Left colon (tissue), 2 donors: ENCODE measurements at regions of chr10 and their contacts with region 1.

Region 1: GRCh38 chr10:16612115-16612980 is 90.7 kb upstream of the C1QL3 start:
- DNase-seq: peak in 1 of 2 donors; percentile 14
- ATAC-seq: no peak

Region 2: GRCh38 chr10:16316733-16317390 is 295.5 kb before region 1 on chr10:
- intact Hi-C with region 1: loop called in 1 of 2 experiments (anchors 10 kb)
- DNase-seq: no peak
- ATAC-seq: no peak

Region 3: GRCh38 chr10:16681521-16681920 is 69.2 kb after region 1 on chr10:
- intact Hi-C with region 1: no loop called
- DNase-seq: no peak
- ATAC-seq: no peak